ENCODE measurements at regions of chr2 and their contacts with region 1.

Region 1: DNA sequence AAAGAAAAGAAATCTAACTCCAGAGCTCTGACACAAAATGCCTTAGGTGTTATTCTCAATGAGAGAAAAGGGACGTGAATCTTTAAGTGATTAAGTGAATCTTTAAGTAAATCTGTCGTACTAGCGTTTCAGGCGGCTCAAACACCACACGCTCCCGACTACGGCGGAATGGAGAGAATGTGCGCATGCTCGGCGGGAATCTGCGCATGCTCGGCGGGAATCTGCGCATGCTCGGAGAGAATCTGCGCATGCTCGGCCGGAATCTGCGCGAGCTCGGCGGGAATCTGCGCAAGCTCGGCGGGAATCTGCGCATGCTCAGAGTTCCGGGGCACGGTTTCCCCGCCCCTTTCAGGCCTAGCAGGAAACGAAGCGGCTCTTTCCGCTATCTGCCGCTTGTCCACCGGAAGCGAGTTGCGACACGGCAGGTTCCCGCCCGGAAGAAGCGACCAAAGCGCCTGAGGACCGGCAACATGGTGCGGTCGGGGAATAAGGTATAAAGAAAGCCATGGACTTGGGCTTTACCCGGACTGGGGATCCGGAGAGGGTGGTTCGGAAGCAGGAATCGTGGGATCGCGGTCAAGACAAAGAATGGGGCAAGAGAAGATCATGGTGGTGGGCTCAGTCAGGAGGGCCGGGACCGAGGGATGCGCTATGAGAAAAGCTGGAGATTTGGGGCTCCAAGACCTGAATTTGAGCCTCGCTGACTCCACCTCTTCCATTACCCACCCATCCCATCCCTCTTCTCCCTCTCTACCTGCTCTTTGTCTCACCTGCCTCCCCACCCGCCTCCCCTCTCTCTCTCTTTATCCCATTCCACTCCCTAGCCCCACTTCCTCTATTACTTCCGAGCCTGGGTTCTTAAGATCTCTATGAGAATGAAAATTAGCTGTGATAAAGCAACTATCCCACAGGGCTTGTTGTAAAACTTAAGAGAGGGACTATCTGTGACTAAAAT is at the start of gene XRCC5:
- DNase-seq: peak; percentile 93 to 98 (median 97)
- ATAC-seq: peak; percentile 81 to 88
- H3K4me3 Mint-ChIP-seq: peak within 1 kb of the TSS; percentile 98 to 100 (median 100)
- H3K27ac Mint-ChIP-seq: peak within 1 kb of the TSS; percentile 100
- H3K4me1 Mint-ChIP-seq: peaks cover 25 to 60% (median 53%) of the 10 kb centered on the region in 4 donors
- H3K27me3 Mint-ChIP-seq: peaks cover 0 to 3% (median 0%) of the 10 kb centered on the region in 5 donors
- polyA plus RNA-seq, gene XRCC5: 311 to 364 (median 348) TPM

Region 2: GRCh38 chr2:216044883-216045486 is 64.3 kb before region 1 on chr2:
- POLR2A ChIA-PET with region 1: no interaction called
- DNase-seq: no peak
- ATAC-seq: no peak
- H3K4me3 Mint-ChIP-seq: no peak overlapping the region
- H3K27ac Mint-ChIP-seq: peak overlapping the region in 1 of 10 donors; percentile 31
- H3K4me1 Mint-ChIP-seq: peaks cover 0 to 2% (median 0%) of the 10 kb centered on the region in 4 donors
- H3K27me3 Mint-ChIP-seq: no peaks in the 10 kb centered on the region

Region 3: GRCh38 chr2:216057688-216058193 is 51.5 kb before region 1 on chr2:
- POLR2A ChIA-PET with region 1: interaction called, 24 read pairs
- DNase-seq: peak; percentile 28 to 83 (median 65)
- ATAC-seq: peak; percentile 99
- H3K4me3 Mint-ChIP-seq: peak overlapping the region; percentile 72 to 90 (median 83)
- H3K27ac Mint-ChIP-seq: peak overlapping the region; percentile 94 to 100 (median 99)
- H3K4me1 Mint-ChIP-seq: peaks cover 10 to 40% (median 21%) of the 10 kb centered on the region in 4 donors
- H3K27me3 Mint-ChIP-seq: no peaks in the 10 kb centered on the region

Region 4: GRCh38 chr2:216081487-216082116 is 27.6 kb before region 1 on chr2 and contains the starts of genes PECR and TMEM169:
- POLR2A ChIA-PET with region 1: interaction called, 96 read pairs
- DNase-seq: peak; percentile 37 to 82 (median 66)
- ATAC-seq: peak; percentile 80 to 86
- H3K4me3 Mint-ChIP-seq: peak within 1 kb of the TSS; percentile 86 to 99 (median 93)
- H3K27ac Mint-ChIP-seq: peak within 1 kb of the TSS; percentile 86 to 98 (median 94)
- H3K4me1 Mint-ChIP-seq: peaks cover 24 to 70% (median 60%) of the 10 kb centered on the region in 4 donors
- H3K27me3 Mint-ChIP-seq: no peaks in the 10 kb centered on the region
- polyA plus RNA-seq, gene PECR: 25.4 to 33.3 (median 28.6) TPM
- polyA plus RNA-seq, gene TMEM169: 0.73 to 2.0 (median 1.8) TPM

Region 5: GRCh38 chr2:216119986-216120385 is 10.7 kb after region 1 on chr2:
- POLR2A ChIA-PET with region 1: interaction called, 14 read pairs
- DNase-seq: peak in 3 of 10 donors; percentile 28 to 67 (median 62)
- ATAC-seq: peak; percentile 75 to 91
- H3K4me3 Mint-ChIP-seq: peak overlapping the region; percentile 1 to 80 (median 54)
- H3K27ac Mint-ChIP-seq: peak overlapping the region; percentile 60 to 94 (median 74)
- H3K4me1 Mint-ChIP-seq: peaks cover 34 to 74% (median 70%) of the 10 kb centered on the region in 4 donors
- H3K27me3 Mint-ChIP-seq: no peaks in the 10 kb centered on the region